AG04449 (cell line): ENCODE measurements at regions of chr14 and their contacts with region 1.

Region 1: DNA sequence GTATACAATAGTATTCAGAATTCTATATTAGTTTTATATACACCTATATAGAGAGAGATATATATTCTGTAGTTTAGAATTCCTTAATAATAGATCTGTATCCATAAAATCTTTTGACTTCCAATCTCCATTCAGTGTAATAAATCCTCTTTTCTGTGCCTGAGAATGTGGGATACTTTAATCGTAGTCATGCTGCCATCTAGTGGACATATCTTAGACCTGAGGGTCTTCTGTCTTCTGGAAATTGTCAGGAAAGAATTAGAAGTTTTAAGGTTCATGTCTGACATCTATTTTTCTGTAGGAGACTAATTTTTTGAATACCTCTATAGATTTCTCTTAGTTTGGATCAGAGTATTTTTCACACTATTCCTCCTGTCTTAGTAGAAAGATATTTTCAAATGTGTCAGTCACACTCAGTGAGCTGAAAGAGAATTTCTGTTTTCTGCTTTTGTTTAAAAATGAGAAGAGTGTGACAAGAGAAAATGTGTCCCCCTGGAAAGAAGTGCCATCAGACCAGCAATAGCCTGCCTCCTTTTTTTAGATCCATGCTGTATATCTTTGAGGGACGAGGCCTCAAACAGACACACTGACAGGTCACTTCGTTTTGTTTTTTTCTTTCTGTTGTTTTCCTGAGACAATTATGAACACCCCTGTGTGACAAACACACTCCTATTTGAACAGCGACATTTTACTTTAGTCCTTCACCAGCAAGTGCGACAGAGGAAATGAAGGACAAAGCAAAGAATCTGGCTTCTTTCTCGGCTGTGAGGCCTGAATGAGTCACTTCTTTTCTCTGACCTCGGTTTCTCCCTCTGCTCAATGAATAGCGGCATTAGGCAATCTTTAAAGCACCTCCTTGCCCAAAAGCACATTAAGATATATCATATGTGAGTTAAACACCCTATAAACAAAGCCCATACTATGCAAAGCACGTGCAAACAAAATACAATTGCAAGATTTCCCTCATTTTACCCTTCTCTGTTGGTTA is 96.3 kb downstream of the GALC start:
- DNase-seq: peak; percentile 5
- H3K4me3 ChIP-seq: no peak overlapping the region
- CTCF ChIP-seq: peak; percentile 43

Region 2: GRCh38 chr14:87745507-87746118 is 151.1 kb before region 1 on chr14:
- CTCF ChIA-PET with region 1: interaction called, 31 read pairs
- POLR2A ChIA-PET with region 1: no interaction called
- DNase-seq: no peak
- H3K4me3 ChIP-seq: no peak overlapping the region
- CTCF ChIP-seq: peak; percentile 61

Region 3: DNA sequence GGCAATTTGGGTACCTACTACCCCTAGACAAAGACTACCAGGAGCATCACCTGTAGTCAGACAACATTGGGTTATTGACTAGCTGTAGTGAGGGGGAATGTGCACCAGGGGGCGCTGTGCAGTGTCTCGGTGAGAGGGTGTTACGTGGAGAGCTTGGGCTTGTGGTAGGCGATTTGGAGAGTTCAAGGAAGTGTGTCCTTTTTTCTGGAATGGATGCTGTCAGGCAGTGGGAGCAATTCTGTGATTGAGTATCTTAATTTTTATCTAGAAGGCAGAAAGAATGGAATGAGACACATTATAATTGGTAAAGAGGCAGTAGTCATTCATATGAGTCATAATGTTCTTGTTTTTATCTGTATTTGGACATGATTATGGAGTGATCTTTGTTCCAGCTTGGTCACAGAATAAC is 91.4 kb before region 1 on chr14:
- CTCF ChIA-PET with region 1: interaction called, 136 read pairs
- POLR2A ChIA-PET with region 1: no interaction called
- DNase-seq: no peak
- H3K4me3 ChIP-seq: no peak overlapping the region
- CTCF ChIP-seq: peak; percentile 67

Region 4: DNA sequence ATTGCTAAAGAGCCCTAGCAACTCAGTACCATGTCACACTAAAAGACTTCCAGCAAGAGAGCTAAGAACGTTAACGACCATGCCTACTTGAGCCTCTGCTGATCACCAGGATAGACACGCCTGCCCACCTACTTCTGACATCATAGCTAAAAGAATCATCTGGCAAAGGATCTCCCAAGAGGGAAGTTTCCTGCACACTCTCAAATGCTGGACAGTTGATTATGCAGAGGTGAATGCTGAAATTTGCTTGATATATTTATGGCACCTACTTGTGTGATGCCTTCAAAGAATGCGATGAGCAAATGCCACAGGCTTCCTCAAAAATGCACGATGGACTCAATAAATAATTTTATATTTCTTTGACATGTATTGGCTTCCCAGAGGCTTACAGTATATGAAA is 17.3 kb before region 1 on chr14:
- CTCF ChIA-PET with region 1: interaction called, 12 read pairs
- POLR2A ChIA-PET with region 1: no interaction called
- DNase-seq: no peak
- H3K4me3 ChIP-seq: no peak overlapping the region
- CTCF ChIP-seq: no peak